Activated CD8-positive, alpha-beta T cell treated with anti-CD3 and anti-CD28 coated beads, Interleukin-2, amount 10 ng/mL, durations not matched to agents 7 days and 5 days (primary cell): ENCODE measurements at regions of chr10 and their contacts with region 1.

Region 1: GRCh38 chr10:89217057-89217990 is 10.2 kb upstream of the CH25H start:
- DNase-seq: peak; percentile 81
- ATAC-seq: peak; percentile 55
- H3K4me3 Mint-ChIP-seq: no peak overlapping the region
- H3K27ac Mint-ChIP-seq: no peak overlapping the region
- H3K4me1 Mint-ChIP-seq: peaks cover 8% of the 10 kb centered on the region
- H3K27me3 Mint-ChIP-seq: peaks cover 2% of the 10 kb centered on the region

Region 2: DNA sequence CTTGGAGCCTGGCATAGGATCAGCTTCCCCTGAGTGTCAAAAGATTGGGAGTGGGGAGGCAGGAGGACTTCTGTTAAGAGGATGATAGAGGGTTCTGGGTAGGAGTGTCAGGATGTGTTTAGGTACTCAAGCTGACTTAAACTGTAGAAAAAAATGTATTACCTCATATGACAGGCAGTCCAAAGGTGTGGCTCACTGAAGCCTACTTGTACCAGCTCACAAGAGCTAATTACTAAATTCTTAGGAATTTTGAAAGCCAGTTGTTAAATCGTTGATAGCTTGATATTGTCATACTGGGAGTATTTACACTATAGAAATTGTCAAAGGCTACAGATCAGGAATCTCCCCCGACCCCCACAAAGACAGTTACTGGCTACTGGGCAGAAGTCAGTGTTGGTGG is 194.6 kb before region 1 on chr10:
- CTCF ChIA-PET with region 1: interaction called, 27 read pairs
- POLR2A ChIA-PET with region 1: no interaction called
- DNase-seq: no peak
- ATAC-seq: no peak
- H3K4me3 Mint-ChIP-seq: no peak overlapping the region
- H3K27ac Mint-ChIP-seq: no peak overlapping the region
- H3K4me1 Mint-ChIP-seq: no peaks in the 10 kb centered on the region
- H3K27me3 Mint-ChIP-seq: no peaks in the 10 kb centered on the region

Region 3: DNA sequence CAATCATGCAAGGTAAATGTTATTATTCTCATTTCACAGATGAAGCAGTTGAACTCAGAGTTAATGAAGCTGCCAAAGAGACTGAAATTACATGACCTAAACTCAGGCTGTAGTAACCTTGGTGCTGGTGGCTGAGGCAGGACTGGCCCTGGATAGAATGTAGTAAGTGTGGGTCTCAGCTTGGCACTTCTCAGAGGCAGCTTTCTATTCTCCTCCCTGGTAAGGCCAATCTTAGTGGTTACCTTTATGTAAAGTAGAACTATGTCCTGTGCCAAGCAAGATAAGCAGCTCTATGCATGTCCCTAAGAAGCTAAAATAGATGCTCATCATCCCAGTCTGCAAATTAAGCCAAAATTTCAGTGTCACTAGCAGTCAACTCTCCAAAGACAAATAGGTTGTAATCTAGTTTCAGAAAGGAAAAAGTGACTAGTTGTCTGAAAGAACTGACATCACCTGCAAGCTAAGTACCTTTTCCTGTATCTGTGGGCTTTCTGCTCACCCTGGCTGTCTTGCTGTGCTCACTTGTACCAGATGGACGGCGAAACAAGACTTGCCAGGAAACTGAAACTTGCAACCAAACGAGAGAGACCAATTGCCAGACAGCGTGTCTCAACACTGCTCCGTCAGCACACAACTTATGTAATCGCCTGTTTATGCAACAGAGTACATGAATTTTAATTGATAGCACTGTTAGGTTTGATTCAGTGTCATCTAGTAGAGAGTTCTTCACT is 53.9 kb before region 1 on chr10:
- CTCF ChIA-PET with region 1: interaction called, 11 read pairs
- POLR2A ChIA-PET with region 1: no interaction called
- DNase-seq: peak; percentile 84
- ATAC-seq: peak; percentile 96
- H3K4me3 Mint-ChIP-seq: peak overlapping the region; percentile 67
- H3K27ac Mint-ChIP-seq: peak overlapping the region; percentile 84
- H3K4me1 Mint-ChIP-seq: peaks cover 31% of the 10 kb centered on the region
- H3K27me3 Mint-ChIP-seq: peaks cover 6% of the 10 kb centered on the region

Region 4: DNA sequence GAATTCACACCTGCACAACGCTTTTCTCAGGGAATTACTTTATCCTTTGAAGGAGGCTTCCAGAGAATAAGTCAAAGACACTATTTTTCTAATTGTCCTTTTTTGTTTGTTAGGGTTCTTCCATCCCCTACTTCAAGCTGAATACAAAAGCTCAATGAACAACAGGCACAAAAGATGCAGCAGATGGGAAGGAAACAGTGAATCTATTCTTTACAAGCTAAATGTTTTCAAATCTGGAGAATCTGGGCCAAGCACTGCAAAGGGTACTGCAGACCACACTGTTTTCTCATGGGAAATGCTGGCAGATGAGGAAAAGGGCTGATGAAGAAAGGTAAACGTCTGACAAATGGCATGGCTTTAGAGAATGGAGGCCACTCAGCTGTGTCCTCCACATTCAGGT is 15.7 kb after region 1 on chr10:
- CTCF ChIA-PET with region 1: interaction called, 12 read pairs
- POLR2A ChIA-PET with region 1: no interaction called
- DNase-seq: no peak
- ATAC-seq: no peak
- H3K4me3 Mint-ChIP-seq: no peak overlapping the region
- H3K27ac Mint-ChIP-seq: no peak overlapping the region
- H3K4me1 Mint-ChIP-seq: no peaks in the 10 kb centered on the region
- H3K27me3 Mint-ChIP-seq: no peaks in the 10 kb centered on the region

Region 5: DNA sequence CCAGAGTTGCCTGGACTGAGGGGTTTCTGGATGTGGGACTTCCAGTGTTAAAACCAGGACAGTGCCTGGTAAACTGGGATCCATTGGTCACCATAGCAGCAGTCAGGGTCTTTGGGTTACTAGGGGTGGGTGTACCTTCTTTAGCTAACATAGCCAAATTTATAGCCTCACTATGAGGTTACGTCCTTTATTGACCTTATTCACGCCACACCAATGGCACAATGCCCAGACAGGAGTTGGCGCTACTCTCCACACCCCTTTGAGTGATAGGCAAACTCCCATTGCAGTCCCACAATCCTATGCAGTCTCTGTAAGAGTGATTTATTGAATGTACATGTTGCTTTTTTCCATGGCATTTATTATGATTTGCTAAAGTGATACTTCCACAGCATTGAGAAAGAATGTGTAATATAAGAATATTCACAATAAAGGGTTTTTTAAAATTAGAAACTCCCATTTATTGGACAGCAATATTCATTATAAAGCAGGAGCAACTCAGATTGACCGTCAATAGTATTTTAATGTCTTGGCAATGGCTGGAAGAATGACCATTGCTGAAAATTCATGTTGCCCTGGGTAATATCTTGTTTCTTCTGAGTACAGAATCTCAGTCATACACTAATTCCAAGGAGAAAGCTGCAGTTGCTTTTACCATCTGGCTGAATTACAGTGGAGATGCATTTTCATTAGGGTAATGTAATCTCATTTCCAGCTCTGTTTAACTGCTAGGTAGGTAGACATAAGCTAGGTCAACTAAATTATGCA is 223.1 kb after region 1 on chr10:
- CTCF ChIA-PET with region 1: no interaction called
- POLR2A ChIA-PET with region 1: no interaction called
- DNase-seq: no peak
- ATAC-seq: no peak
- H3K4me3 Mint-ChIP-seq: no peak overlapping the region
- H3K27ac Mint-ChIP-seq: no peak overlapping the region
- H3K4me1 Mint-ChIP-seq: no peaks in the 10 kb centered on the region
- H3K27me3 Mint-ChIP-seq: peaks cover 27% of the 10 kb centered on the region